ENCODE measurements at regions of chr7 and their contacts with region 1.

Region 1: GRCh38 chr7:139840776-139841175 is 11.7 kb downstream of the TBXAS1 start:
- DNase-seq: peak in 1 of 2 donors; percentile 74
- H3K4me3 ChIP-seq: no peak overlapping the region
- CTCF ChIP-seq: no peak
- POLR2A ChIP-seq: no peak

Region 2: DNA sequence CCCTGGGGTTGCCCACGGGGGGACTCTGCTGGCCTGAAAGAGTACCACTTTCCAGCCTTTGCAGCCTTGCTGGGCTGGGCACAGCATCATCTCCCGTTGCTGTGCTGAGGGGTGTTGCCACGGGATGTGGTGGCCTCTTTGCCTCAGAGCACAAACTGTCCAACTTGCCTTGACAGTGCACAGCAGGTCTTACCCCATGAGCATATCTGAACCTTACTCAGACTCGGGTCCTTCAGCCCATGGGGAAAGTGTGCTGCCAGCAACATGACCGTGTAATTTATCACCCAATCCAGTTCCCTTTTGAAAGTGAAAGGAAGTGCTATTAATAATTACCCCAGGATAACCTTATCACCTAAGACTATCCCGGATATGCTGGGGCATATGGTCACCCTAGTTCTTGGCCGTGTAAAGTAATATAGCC is 35.1 kb after region 1 on chr7:
- intact Hi-C with region 1: loop called (anchors 1 kb)
- DNase-seq: peak in 1 of 2 donors; percentile 32
- H3K4me3 ChIP-seq: no peak overlapping the region
- CTCF ChIP-seq: no peak
- POLR2A ChIP-seq: no peak

Measured in lower leg skin (tissue), 4 donors.